OCI-LY7 (cell line): ENCODE measurements at regions of chr7 and their contacts with region 1.

Region 1: GRCh38 chr7:101244375-101245146 is at the start of gene FIS1:
- DNase-seq: peak; percentile 94
- H3K4me3 ChIP-seq: peak within 1 kb of the TSS; percentile 87
- H3K27ac ChIP-seq: peak within 1 kb of the TSS; percentile 58
- H3K4me1 ChIP-seq: peaks cover 18% of the 10 kb centered on the region
- CTCF ChIP-seq: peak; percentile 92
- total RNA-seq, gene FIS1: 92.7 and 114 TPM in 2 replicates

Region 2: GRCh38 chr7:101217388-101218235 is 26.9 kb before region 1 on chr7 and contains the starts of genes PLOD3 and ZNHIT1:
- CTCF ChIA-PET with region 1: interaction called, 6 read pairs
- POLR2A ChIA-PET with region 1: interaction called, 6 read pairs
- intact Hi-C with region 1: loop called (anchors 2 kb)
- DNase-seq: peak; percentile 99
- H3K4me3 ChIP-seq: peak within 1 kb of the TSS; percentile 95
- H3K27ac ChIP-seq: peak within 1 kb of the TSS; percentile 48
- H3K4me1 ChIP-seq: peaks cover 18% of the 10 kb centered on the region
- CTCF ChIP-seq: 0 out of 2 replicates have a peak, but pooled peaks have one; percentile 6
- total RNA-seq, gene PLOD3: 9.2 and 12.1 TPM in 2 replicates
- total RNA-seq, gene ZNHIT1: 63.8 and 77.3 TPM in 2 replicates

Region 3: DNA sequence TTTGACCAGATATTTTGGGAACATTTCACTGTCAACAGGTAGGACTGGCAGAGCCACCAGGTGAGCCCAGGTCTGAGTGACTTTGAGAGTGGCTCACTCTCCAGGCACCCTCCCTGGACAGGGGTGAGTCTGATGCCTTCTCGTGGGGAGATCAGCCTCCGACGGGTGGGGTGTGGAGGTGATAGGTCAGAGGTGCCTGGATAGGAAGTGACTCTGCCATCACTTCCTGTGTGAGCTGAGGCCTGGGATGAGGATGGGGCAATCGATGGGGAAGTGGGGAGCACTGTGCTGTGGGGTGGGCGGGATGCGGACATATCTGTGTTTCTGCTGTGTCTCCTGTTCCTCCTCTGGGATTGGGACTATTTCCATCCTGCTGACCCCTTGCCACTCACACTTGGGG is 42.5 kb after region 1 on chr7:
- CTCF ChIA-PET with region 1: interaction called, 4 read pairs
- POLR2A ChIA-PET with region 1: no interaction called
- intact Hi-C with region 1: loop called (anchors 5 kb)
- DNase-seq: no peak
- H3K4me3 ChIP-seq: no peak overlapping the region
- H3K27ac ChIP-seq: no peak overlapping the region
- H3K4me1 ChIP-seq: peaks cover 25% of the 10 kb centered on the region
- CTCF ChIP-seq: no peak